ENCODE measurements at regions of chr3 and their contacts with region 1.

Region 1: GRCh38 chr3:107619549-107619948 is 96.8 kb downstream of the BBX start:
- DNase-seq: no peak
- ATAC-seq: no peak
- H3K4me3 ChIP-seq: no peak overlapping the region
- H3K27ac ChIP-seq: no peak overlapping the region
- H3K4me1 ChIP-seq: peaks cover 8% of the 10 kb centered on the region
- H3K27me3 ChIP-seq: no peaks in the 10 kb centered on the region
- CTCF ChIP-seq: no peak

Region 2: GRCh38 chr3:107589454-107589853 is 30.1 kb before region 1 on chr3:
- intact Hi-C with region 1: no loop called
- DNase-seq: no peak
- ATAC-seq: no peak
- H3K4me3 ChIP-seq: no peak overlapping the region
- H3K27ac ChIP-seq: no peak overlapping the region
- H3K4me1 ChIP-seq: peaks cover 9% of the 10 kb centered on the region
- H3K27me3 ChIP-seq: no peaks in the 10 kb centered on the region
- CTCF ChIP-seq: no peak

Region 3: DNA sequence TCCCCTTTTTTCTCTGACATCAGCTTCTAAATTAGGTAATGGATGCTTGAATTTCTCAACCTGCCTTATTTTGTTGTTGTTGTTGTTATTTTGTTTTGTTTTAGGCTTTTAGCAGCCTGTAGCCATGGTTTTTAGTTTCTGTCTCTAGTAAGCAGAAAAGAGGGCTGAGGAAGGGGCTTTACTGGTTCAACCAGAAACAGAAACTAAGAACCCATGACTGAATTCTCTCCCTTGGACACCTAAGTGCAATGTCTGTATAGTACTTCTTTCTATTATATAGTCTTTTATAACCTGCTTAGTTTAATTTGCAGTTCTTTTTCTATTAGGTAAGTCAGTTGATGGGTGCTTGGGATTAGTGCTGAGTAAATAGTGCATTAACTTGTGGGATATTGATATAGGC is 32.2 kb after region 1 on chr3:
- intact Hi-C with region 1: loop called in 1 of 2 experiments (anchors 5 kb)
- DNase-seq: no peak
- ATAC-seq: no peak
- H3K4me3 ChIP-seq: no peak overlapping the region
- H3K27ac ChIP-seq: no peak overlapping the region
- H3K4me1 ChIP-seq: peaks cover 15% of the 10 kb centered on the region
- H3K27me3 ChIP-seq: no peaks in the 10 kb centered on the region
- CTCF ChIP-seq: no peak

Measured in psoas muscle (tissue), 8 donors.